Dendritic cell treated with granulocyte-macrophage colony-stimulating factor and Interleukin-4, amounts not matched to agents 40 ng/mL and 50 ng/mL, for 4 days (primary cell): ENCODE measurements at regions of chr22 and their contacts with region 1.

Region 1: GRCh38 chr22:19291580-19292457 is at the start of gene CLTCL1:
- H3K4me3 Mint-ChIP-seq: peak within 1 kb of the TSS; percentile 79
- H3K27ac Mint-ChIP-seq: peak within 1 kb of the TSS; percentile 50
- H3K4me1 Mint-ChIP-seq: peaks cover 29% of the 10 kb centered on the region
- H3K27me3 Mint-ChIP-seq: peaks cover 34% of the 10 kb centered on the region

Region 2: GRCh38 chr22:19122143-19122751 is 169.6 kb before region 1 on chr22 and contains the start of gene DGCR2:
- intact Hi-C with region 1: loop called (anchors 5 kb)
- H3K4me3 Mint-ChIP-seq: peak within 1 kb of the TSS; percentile 89
- H3K27ac Mint-ChIP-seq: peak within 1 kb of the TSS; percentile 85
- H3K4me1 Mint-ChIP-seq: peaks cover 53% of the 10 kb centered on the region
- H3K27me3 Mint-ChIP-seq: peaks cover 2% of the 10 kb centered on the region

Region 3: GRCh38 chr22:19178656-19179496 is 112.9 kb before region 1 on chr22 and contains the start of gene SLC25A1:
- intact Hi-C with region 1: loop called (anchors 2 kb)
- H3K4me3 Mint-ChIP-seq: peak within 1 kb of the TSS; percentile 82
- H3K27ac Mint-ChIP-seq: peak within 1 kb of the TSS; percentile 64
- H3K4me1 Mint-ChIP-seq: peaks cover 45% of the 10 kb centered on the region
- H3K27me3 Mint-ChIP-seq: no peaks in the 10 kb centered on the region

Region 4: GRCh38 chr22:19232623-19233022 is 59.2 kb before region 1 on chr22:
- intact Hi-C with region 1: loop called (anchors 10 kb)
- H3K4me3 Mint-ChIP-seq: no peak overlapping the region
- H3K27ac Mint-ChIP-seq: no peak overlapping the region
- H3K4me1 Mint-ChIP-seq: peaks cover 7% of the 10 kb centered on the region
- H3K27me3 Mint-ChIP-seq: no peaks in the 10 kb centered on the region

Region 5: GRCh38 chr22:19432133-19432851 is 140.5 kb after region 1 on chr22 and contains the start of gene MRPL40:
- intact Hi-C with region 1: loop called (anchors 10 kb)
- H3K4me3 Mint-ChIP-seq: peak within 1 kb of the TSS; percentile 85
- H3K27ac Mint-ChIP-seq: peak within 1 kb of the TSS; percentile 97
- H3K4me1 Mint-ChIP-seq: peaks cover 52% of the 10 kb centered on the region
- H3K27me3 Mint-ChIP-seq: no peaks in the 10 kb centered on the region

Region 6: GRCh38 chr22:19479357-19480172 is 187.7 kb after region 1 on chr22 and contains the start of gene CDC45:
- intact Hi-C with region 1: loop called (anchors 1 kb)
- H3K4me3 Mint-ChIP-seq: peak within 1 kb of the TSS; percentile 88
- H3K27ac Mint-ChIP-seq: peak within 1 kb of the TSS; percentile 97
- H3K4me1 Mint-ChIP-seq: peaks cover 33% of the 10 kb centered on the region
- H3K27me3 Mint-ChIP-seq: no peaks in the 10 kb centered on the region